Gastrocnemius medialis (tissue), 4 donors: ENCODE measurements at regions of chr17 and their contacts with region 1.

Region 1: GRCh38 chr17:64506576-64507477 is at the start of gene CEP95:
- DNase-seq: peak; percentile 94 to 97
- ATAC-seq: peak; percentile 81 to 83
- H3K4me3 ChIP-seq: peak within 1 kb of the TSS; percentile 89 to 98 (median 96)
- H3K27ac ChIP-seq: peak within 1 kb of the TSS; percentile 97 to 100 (median 99)
- H3K4me1 ChIP-seq: peaks cover 36 to 40% of the 10 kb centered on the region in 2 donors
- H3K27me3 ChIP-seq: no peaks in the 10 kb centered on the region
- CTCF ChIP-seq: no peak
- POLR2A ChIP-seq: peak; percentile 82 to 83
- total RNA-seq, gene CEP95: 6.5 to 18.8 (median 17.7) TPM

Region 2: GRCh38 chr17:63827002-63827771 is 679.6 kb before region 1 on chr17 and contains the starts of genes FTSJ3 and PSMC5:
- in situ Hi-C with region 1: loop called in 1 of 4 experiments (anchors 25 kb)
- intact Hi-C with region 1: loop called (anchors 10 kb)
- DNase-seq: peak; percentile 94 to 95
- ATAC-seq: peak; percentile 96 to 97
- H3K4me3 ChIP-seq: peak within 1 kb of the TSS; percentile 84 to 89 (median 86)
- H3K27ac ChIP-seq: peak within 1 kb of the TSS; percentile 92 to 95 (median 94)
- H3K4me1 ChIP-seq: peaks cover 25 to 33% of the 10 kb centered on the region in 2 donors
- H3K27me3 ChIP-seq: no peaks in the 10 kb centered on the region
- CTCF ChIP-seq: peak in 3 of 5 experiments; percentile 23 to 53 (median 31)
- POLR2A ChIP-seq: peak; percentile 78 to 91
- total RNA-seq, gene FTSJ3: 24.6 to 46.3 (median 34.9) TPM
- total RNA-seq, gene PSMC5: 103 to 153 (median 123) TPM

Region 3: GRCh38 chr17:64648234-64648633 is 141.4 kb after region 1 on chr17:
- in situ Hi-C with region 1: loop called in 1 of 4 experiments (anchors 10 kb)
- intact Hi-C with region 1: no loop called
- DNase-seq: no peak
- ATAC-seq: no peak
- H3K4me3 ChIP-seq: no peak overlapping the region
- H3K27ac ChIP-seq: no peak overlapping the region
- H3K4me1 ChIP-seq: peaks cover 4 to 5% of the 10 kb centered on the region in 2 donors
- H3K27me3 ChIP-seq: no peaks in the 10 kb centered on the region
- CTCF ChIP-seq: no peak
- POLR2A ChIP-seq: no peak

Region 4: DNA sequence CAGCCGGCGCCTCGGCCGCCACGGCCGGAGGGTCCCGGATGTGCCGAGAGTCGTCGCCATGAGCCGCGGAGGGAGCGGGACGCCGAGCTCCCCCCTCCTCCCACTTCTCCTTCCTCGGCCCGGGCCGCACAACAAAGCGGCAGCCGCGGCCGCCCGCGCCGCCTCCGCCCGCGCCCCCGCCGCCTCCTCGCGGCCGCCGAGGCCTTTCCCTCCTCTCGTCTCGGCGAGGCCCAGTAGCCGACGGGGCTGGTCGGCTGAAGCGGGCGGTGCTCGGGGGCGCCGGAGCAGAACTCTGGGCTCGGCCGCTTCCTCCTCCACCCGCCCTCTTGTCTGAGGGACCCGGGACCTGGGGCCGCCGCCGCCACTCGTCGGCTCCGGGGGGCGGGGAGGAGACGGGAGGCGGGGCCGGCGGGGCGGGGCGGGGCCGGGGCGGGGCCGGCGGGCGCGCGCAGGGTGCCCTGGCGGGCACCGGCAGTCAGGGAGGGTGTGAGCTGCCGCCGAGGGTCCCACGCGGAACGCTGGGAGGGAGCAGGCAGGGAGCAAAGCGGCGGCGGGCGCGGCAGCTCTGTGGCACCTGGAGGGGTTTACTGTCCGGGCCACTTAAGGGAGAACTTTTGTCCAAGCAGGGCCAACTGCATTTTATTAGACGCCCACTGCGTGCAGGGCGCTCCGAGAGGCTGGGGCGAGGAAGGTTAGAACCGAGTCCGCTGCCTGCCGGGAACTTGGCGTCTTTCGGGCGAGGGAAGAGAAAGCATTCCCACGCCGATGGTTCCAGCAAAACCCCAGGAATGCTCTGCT is 155.3 kb after region 1 on chr17 and contains the start of gene SMURF2:
- in situ Hi-C with region 1: no loop called
- intact Hi-C with region 1: loop called (anchors 5 kb)
- DNase-seq: peak; percentile 56 to 70
- ATAC-seq: peak; percentile 88 to 91
- H3K4me3 ChIP-seq: peak within 1 kb of the TSS; percentile 75 to 90 (median 82)
- H3K27ac ChIP-seq: peak within 1 kb of the TSS; percentile 87 to 95 (median 90)
- H3K4me1 ChIP-seq: peaks cover 15 to 22% of the 10 kb centered on the region in 2 donors
- H3K27me3 ChIP-seq: no peaks in the 10 kb centered on the region
- CTCF ChIP-seq: peak in 2 of 5 experiments; percentile 24 to 31
- POLR2A ChIP-seq: peak; percentile 87 to 98
- total RNA-seq, gene SMURF2: 8.9 to 15.3 (median 11.4) TPM